ENCODE measurements at regions of chr9 and their contacts with region 1.

Region 1: GRCh38 chr9:123120131-123120530 is 86.7 kb downstream of the GPR21 start:
- DNase-seq: no peak
- ATAC-seq: no peak
- H3K4me3 ChIP-seq: no peak overlapping the region
- H3K27ac ChIP-seq: no peak overlapping the region
- H3K4me1 ChIP-seq: no peaks in the 10 kb centered on the region
- H3K27me3 ChIP-seq: no peaks in the 10 kb centered on the region
- CTCF ChIP-seq: no peak

Region 2: GRCh38 chr9:123191260-123192079 is 71.3 kb after region 1 on chr9:
- CTCF ChIA-PET with region 1: no interaction called
- POLR2A ChIA-PET with region 1: no interaction called
- intact Hi-C with region 1: no loop called
- DNase-seq: no peak
- ATAC-seq: no peak
- H3K4me3 ChIP-seq: no peak overlapping the region
- H3K27ac ChIP-seq: no peak overlapping the region
- H3K4me1 ChIP-seq: no peaks in the 10 kb centered on the region
- H3K27me3 ChIP-seq: no peaks in the 10 kb centered on the region
- CTCF ChIP-seq: no peak

Region 3: DNA sequence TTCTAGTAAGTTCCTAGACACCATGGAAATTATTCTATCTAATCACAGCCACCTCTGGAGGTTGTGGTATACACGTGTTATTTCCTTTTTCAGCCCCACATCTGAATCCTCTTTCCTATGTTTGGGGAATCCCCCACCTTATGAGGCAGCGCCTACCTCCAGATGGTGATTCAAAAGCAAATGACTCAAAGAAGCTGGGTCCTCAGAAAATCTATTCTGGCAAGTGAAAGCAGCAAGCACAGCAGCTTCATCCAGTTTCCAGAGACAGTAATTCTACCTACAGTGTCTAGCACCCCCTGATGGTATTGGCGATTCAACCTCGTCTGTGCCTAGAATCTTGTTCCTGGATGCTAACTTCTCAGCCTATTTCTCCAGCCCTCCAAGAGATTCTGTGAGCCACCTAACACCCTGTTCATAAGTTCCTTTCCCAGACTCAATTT is 105.3 kb after region 1 on chr9:
- CTCF ChIA-PET with region 1: no interaction called
- POLR2A ChIA-PET with region 1: no interaction called
- intact Hi-C with region 1: loop called (anchors 10 kb)
- DNase-seq: peak; percentile 45
- ATAC-seq: peak; percentile 71
- H3K4me3 ChIP-seq: no peak overlapping the region
- H3K27ac ChIP-seq: no peak overlapping the region
- H3K4me1 ChIP-seq: peaks cover 10% of the 10 kb centered on the region
- H3K27me3 ChIP-seq: no peaks in the 10 kb centered on the region
- CTCF ChIP-seq: peak; percentile 59

Measured in PC-3 (cell line).